K562 (cell line): ENCODE measurements at regions of chr2 and their contacts with region 1.

Region 1: DNA sequence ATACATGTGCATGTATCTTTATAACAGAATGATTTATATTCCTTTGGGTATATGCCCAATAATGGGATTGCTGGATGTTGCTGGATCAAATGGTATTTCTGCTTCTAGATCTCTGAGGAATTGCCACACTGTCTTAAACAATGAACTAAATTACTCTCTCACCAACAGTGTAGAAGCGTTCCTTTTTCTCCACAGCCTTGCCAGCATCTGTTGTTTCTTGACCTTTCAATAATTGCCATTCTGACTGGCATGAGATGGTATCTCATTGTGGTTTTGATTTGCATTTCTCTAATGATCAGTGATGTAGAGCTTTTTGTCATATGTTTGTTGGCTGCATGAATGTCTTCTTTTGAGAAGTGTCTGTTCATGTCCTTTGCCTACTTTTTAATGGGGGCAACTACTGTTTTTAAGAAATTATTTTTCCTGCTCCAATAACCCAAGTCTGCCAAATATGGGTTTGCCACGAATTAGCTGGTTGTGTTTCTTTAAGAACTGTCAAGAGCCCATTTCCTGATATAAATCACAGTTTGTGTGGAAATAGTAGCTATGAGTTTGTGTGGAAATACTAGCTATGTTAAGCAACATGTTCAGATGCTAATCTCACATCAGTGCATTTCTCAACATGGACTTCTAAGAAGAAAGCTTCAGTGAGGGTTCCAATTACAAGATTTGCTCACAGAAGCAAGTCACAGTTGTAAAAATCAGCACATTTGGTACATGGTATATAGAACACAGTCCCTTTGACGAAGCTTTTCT is 259.4 kb downstream of the ANAPC1 start:
- DNase-seq: no peak
- ATAC-seq: no peak
- H3K4me3 ChIP-seq: no peak overlapping the region
- H3K27ac ChIP-seq: no peak overlapping the region
- H3K4me1 ChIP-seq: peaks cover 6 to 12% of the 10 kb centered on the region in 2 experiments; a peak in 4 of 5 replicates
- H3K27me3 ChIP-seq: no peaks in the 10 kb centered on the region
- CTCF ChIP-seq: no peak
- EP300 ChIP-seq: peak; percentile 52; the same call in 1 of the 2 replicates
- POLR2A ChIP-seq: no peak
- RAD21 ChIP-seq: no peak

Region 2: DNA sequence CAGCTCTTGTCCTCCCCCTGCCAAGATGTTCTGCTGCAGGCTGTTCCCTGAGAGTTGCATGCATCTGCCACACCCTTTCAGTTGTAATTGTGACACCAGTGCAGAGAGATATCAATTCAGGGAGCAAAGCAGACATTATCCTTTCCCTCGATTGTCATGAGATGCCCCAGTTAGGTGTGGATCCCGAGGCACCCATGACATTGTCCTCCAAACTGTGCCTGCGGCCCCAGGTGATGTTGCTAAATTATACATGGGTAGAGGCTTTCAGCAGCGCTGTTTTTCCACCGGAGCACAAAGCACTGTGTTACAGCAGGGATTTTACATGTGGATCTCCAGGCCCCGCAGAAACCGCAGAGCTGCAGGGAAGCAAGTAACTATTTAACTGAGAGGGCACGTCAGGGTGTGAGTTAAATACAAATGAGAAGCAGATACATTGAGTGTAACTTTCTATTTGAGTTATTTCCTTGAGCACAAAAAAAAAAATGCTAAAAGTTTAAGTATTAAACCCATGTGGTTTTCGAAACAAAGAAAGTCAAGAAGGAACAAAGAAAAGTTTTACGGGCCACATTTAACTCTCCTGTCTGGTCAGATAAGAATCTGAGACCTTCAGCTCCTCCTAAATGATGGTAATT is 594.2 kb before region 1 on chr2:
- CTCF ChIA-PET with region 1: no interaction called
- POLR2A ChIA-PET with region 1: no interaction called
- in situ Hi-C with region 1: no loop called
- intact Hi-C with region 1: no loop called
- DNase-seq: no peak
- ATAC-seq: no peak
- H3K4me3 ChIP-seq: no peak overlapping the region
- H3K27ac ChIP-seq: no peak overlapping the region
- H3K4me1 ChIP-seq: no peaks in the 10 kb centered on the region
- H3K27me3 ChIP-seq: peaks cover 25 to 35% of the 10 kb centered on the region in 2 experiments
- CTCF ChIP-seq: no peak
- EP300 ChIP-seq: no peak
- POLR2A ChIP-seq: no peak
- RAD21 ChIP-seq: no peak

Region 3: GRCh38 chr2:111642586-111643327 is 18.2 kb after region 1 on chr2:
- CTCF ChIA-PET with region 1: no interaction called
- POLR2A ChIA-PET with region 1: interaction called, 5 read pairs
- in situ Hi-C with region 1: no loop called
- intact Hi-C with region 1: loop called (anchors 2 kb)
- DNase-seq: peak in 2 of 4 experiments; percentile 61 to 87
- ATAC-seq: peak; percentile 96
- H3K4me3 ChIP-seq: no peak overlapping the region
- H3K27ac ChIP-seq: no peak overlapping the region
- H3K4me1 ChIP-seq: peaks cover 7 to 10% of the 10 kb centered on the region in 2 experiments; a peak in 4 of 5 replicates
- H3K27me3 ChIP-seq: no peaks in the 10 kb centered on the region
- CTCF ChIP-seq: no peak
- EP300 ChIP-seq: peak; percentile 81
- POLR2A ChIP-seq: no peak
- RAD21 ChIP-seq: peak in 1 of 2 experiments; percentile 20; a peak in 2 of 4 replicates

Region 4: GRCh38 chr2:111678651-111679050 is 54.1 kb after region 1 on chr2:
- CTCF ChIA-PET with region 1: no interaction called
- POLR2A ChIA-PET with region 1: no interaction called
- in situ Hi-C with region 1: no loop called
- intact Hi-C with region 1: no loop called
- DNase-seq: no peak
- ATAC-seq: no peak
- H3K4me3 ChIP-seq: no peak overlapping the region
- H3K27ac ChIP-seq: no peak overlapping the region
- H3K4me1 ChIP-seq: no peaks in the 10 kb centered on the region; a peak in 1 of 5 replicates
- H3K27me3 ChIP-seq: no peaks in the 10 kb centered on the region
- CTCF ChIP-seq: no peak
- EP300 ChIP-seq: no peak
- POLR2A ChIP-seq: no peak
- RAD21 ChIP-seq: no peak